GM12878 (cell line): ENCODE measurements at regions of chrX and their contacts with region 1.

Region 1: DNA sequence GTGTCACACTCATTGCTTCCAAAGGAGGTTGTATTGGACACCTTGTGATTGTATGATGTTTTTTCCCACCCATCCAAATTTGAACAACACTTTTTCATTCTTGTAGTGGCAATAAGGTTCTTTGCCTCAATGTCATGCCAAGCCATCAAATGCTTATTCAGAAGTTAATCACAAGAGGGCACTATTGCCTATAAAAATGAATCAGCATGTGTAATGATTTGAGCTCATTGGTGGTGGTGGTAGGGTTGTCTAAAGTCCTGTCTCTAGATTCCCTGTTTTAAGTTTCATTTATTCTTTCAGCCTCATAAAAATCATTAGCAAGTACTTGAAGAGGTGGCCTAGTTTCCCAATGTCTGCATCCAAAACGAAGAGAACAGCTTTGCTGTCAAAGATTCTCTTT is 37.0 kb downstream of the IRS4 start:
- DNase-seq: peak; percentile 7
- ATAC-seq: peak; percentile 92
- H3K4me3 ChIP-seq: no peak overlapping the region
- H3K27ac ChIP-seq: no peak overlapping the region
- H3K4me1 ChIP-seq: no peaks in the 10 kb centered on the region
- H3K27me3 ChIP-seq: no peaks in the 10 kb centered on the region
- CTCF ChIP-seq: peak; percentile 23 to 55 (median 50); a peak in 5 of 6 replicates
- EP300 ChIP-seq: no peak
- POLR2A ChIP-seq: no peak
- RAD21 ChIP-seq: peak; percentile 68

Region 2: GRCh38 chrX:108584617-108585211 is 114.7 kb before region 1 on chrX:
- CTCF ChIA-PET with region 1: interaction called, 30 read pairs
- POLR2A ChIA-PET with region 1: no interaction called
- RAD21 ChIA-PET with region 1: interaction called, 15 read pairs
- SMC1A ChIA-PET with region 1: interaction called, 23 read pairs
- in situ Hi-C with region 1: no loop called
- intact Hi-C with region 1: loop called (anchors 5 kb)
- DNase-seq: peak; percentile 1
- ATAC-seq: peak; percentile 53
- H3K4me3 ChIP-seq: no peak overlapping the region
- H3K27ac ChIP-seq: no peak overlapping the region
- H3K4me1 ChIP-seq: no peaks in the 10 kb centered on the region
- H3K27me3 ChIP-seq: no peaks in the 10 kb centered on the region
- CTCF ChIP-seq: peak; percentile 46 to 60 (median 52); a peak in 5 of 6 replicates
- EP300 ChIP-seq: no peak
- POLR2A ChIP-seq: no peak
- RAD21 ChIP-seq: peak; percentile 75

Region 3: GRCh38 chrX:109270580-109271484 is 571.5 kb after region 1 on chrX:
- CTCF ChIA-PET with region 1: interaction called, 32 read pairs
- POLR2A ChIA-PET with region 1: no interaction called
- RAD21 ChIA-PET with region 1: interaction called, 19 read pairs
- SMC1A ChIA-PET with region 1: interaction called, 19 read pairs
- in situ Hi-C with region 1: no loop called
- intact Hi-C with region 1: loop called (anchors 2 kb)
- DNase-seq: peak; percentile 97
- ATAC-seq: peak; percentile 98
- H3K4me3 ChIP-seq: no peak overlapping the region
- H3K27ac ChIP-seq: peak overlapping the region; percentile 52; the same call in 1 of the 2 replicates
- H3K4me1 ChIP-seq: peaks cover 15% of the 10 kb centered on the region
- H3K27me3 ChIP-seq: no peaks in the 10 kb centered on the region
- CTCF ChIP-seq: no peak
- EP300 ChIP-seq: peak; percentile 89; a peak in 3 of 4 replicates
- POLR2A ChIP-seq: no peak
- RAD21 ChIP-seq: 0 out of 2 replicates have a peak, but pooled peaks have one; percentile 5

Region 4: GRCh38 chrX:109389917-109390316 is 690.5 kb after region 1 on chrX:
- CTCF ChIA-PET with region 1: interaction called, 359 read pairs
- POLR2A ChIA-PET with region 1: interaction called, 8 read pairs
- RAD21 ChIA-PET with region 1: interaction called, 330 read pairs
- SMC1A ChIA-PET with region 1: interaction called, 361 read pairs
- in situ Hi-C with region 1: loop called (anchors 5 kb)
- intact Hi-C with region 1: no loop called
- DNase-seq: no peak
- ATAC-seq: no peak
- H3K4me3 ChIP-seq: no peak overlapping the region
- H3K27ac ChIP-seq: no peak overlapping the region
- H3K4me1 ChIP-seq: no peaks in the 10 kb centered on the region
- H3K27me3 ChIP-seq: no peaks in the 10 kb centered on the region
- CTCF ChIP-seq: no peak
- EP300 ChIP-seq: no peak
- POLR2A ChIP-seq: no peak
- RAD21 ChIP-seq: no peak

Region 5: GRCh38 chrX:109485470-109486340 is 786.3 kb after region 1 on chrX:
- CTCF ChIA-PET with region 1: interaction called, 24 read pairs
- POLR2A ChIA-PET with region 1: no interaction called
- RAD21 ChIA-PET with region 1: interaction called, 8 read pairs
- SMC1A ChIA-PET with region 1: interaction called, 11 read pairs
- in situ Hi-C with region 1: no loop called
- intact Hi-C with region 1: no loop called
- DNase-seq: peak; percentile 34
- ATAC-seq: peak; percentile 84
- H3K4me3 ChIP-seq: no peak overlapping the region
- H3K27ac ChIP-seq: no peak overlapping the region
- H3K4me1 ChIP-seq: no peaks in the 10 kb centered on the region
- H3K27me3 ChIP-seq: no peaks in the 10 kb centered on the region
- CTCF ChIP-seq: peak; percentile 93 to 99 (median 99); a peak in 5 of 6 replicates
- EP300 ChIP-seq: no peak
- POLR2A ChIP-seq: no peak
- RAD21 ChIP-seq: peak; percentile 91

Region 6: DNA sequence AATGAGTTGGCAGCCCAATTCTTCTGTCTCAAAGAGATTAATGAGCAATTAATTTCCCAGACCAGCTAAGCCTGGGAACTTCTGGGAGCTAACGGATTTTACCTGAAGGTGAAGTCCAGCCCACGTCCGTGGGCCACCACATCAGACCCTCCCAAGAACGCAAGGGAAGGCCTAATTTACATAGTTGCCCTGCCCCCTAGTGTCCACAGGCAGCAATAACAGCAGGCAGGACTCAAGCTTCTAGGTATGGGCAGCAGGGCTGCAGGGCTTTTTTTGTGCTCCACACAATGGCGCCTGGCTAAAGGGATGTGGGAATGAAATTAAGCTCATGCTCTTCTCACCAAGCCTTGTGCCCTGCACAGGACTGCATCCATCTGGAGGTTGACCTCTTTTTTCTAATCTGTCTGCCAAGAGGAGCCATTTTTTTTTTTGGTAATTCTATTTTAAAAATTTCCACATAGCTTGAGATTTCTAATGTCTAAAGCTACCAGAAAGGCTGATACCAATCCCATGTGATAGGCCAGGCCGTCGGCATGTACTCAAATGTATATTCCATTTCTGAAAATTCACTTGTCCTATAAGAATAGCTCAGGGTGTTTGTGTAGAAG is 1191.6 kb after region 1 on chrX:
- CTCF ChIA-PET with region 1: interaction called, 22 read pairs
- POLR2A ChIA-PET with region 1: no interaction called
- RAD21 ChIA-PET with region 1: interaction called, 13 read pairs
- SMC1A ChIA-PET with region 1: interaction called, 6 read pairs
- in situ Hi-C with region 1: no loop called
- intact Hi-C with region 1: no loop called
- DNase-seq: no peak
- ATAC-seq: peak; percentile 77
- H3K4me3 ChIP-seq: no peak overlapping the region
- H3K27ac ChIP-seq: no peak overlapping the region
- H3K4me1 ChIP-seq: peaks cover 16% of the 10 kb centered on the region
- H3K27me3 ChIP-seq: no peaks in the 10 kb centered on the region
- CTCF ChIP-seq: peak; percentile 85 to 96 (median 94)
- EP300 ChIP-seq: no peak
- POLR2A ChIP-seq: no peak
- RAD21 ChIP-seq: peak; percentile 81